Sigmoid colon (tissue), 7 donors: ENCODE measurements at regions of chr5 and their contacts with region 1.

Region 1: GRCh38 chr5:180090098-180090768 is 18.7 kb upstream of the RNF130 start:
- DNase-seq: peak; percentile 84
- H3K4me3 ChIP-seq: peak overlapping the region; percentile 51 to 69 (median 58)
- H3K27ac ChIP-seq: peak overlapping the region; percentile 76 to 82 (median 80)
- H3K4me1 ChIP-seq: peaks cover 0 to 9% (median 7%) of the 10 kb centered on the region in 4 donors
- H3K27me3 ChIP-seq: no peaks in the 10 kb centered on the region
- CTCF ChIP-seq: peak; percentile 63 to 89 (median 66)
- EP300 ChIP-seq: no peak
- POLR2A ChIP-seq: no peak

Region 2: DNA sequence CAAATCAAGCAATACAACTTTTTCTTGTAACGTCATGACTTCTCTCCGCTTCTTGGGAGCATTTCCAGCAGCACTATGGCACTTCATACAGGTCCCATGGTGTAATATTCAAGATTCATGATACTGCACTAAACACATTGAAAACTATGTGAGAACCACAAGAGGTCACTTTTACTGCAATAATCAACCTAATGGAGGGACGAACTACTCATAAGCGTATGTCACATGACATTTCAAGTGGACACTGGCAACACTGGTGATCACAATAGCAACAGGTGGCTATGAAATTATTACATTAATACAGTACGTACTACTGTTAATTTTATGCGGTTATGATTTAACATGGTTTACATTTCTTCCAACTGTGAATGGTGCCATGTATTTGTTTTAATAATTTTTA is 103.9 kb before region 1 on chr5:
- intact Hi-C with region 1: loop called (anchors 1 kb)
- DNase-seq: no peak
- H3K4me3 ChIP-seq: no peak overlapping the region
- H3K27ac ChIP-seq: no peak overlapping the region
- H3K4me1 ChIP-seq: no peaks in the 10 kb centered on the region
- H3K27me3 ChIP-seq: no peaks in the 10 kb centered on the region
- CTCF ChIP-seq: peak in 1 of 4 experiments; percentile 16
- EP300 ChIP-seq: no peak
- POLR2A ChIP-seq: no peak

Region 3: GRCh38 chr5:180071531-180072255 is 18.5 kb before region 1 on chr5 and contains the start of gene RNF130:
- intact Hi-C with region 1: loop called (anchors 1 kb)
- DNase-seq: peak; percentile 97
- H3K4me3 ChIP-seq: peak within 1 kb of the TSS; percentile 88 to 96 (median 92)
- H3K27ac ChIP-seq: peak within 1 kb of the TSS; percentile 96 to 99 (median 98)
- H3K4me1 ChIP-seq: peaks cover 0 to 42% (median 27%) of the 10 kb centered on the region in 4 donors
- H3K27me3 ChIP-seq: no peaks in the 10 kb centered on the region
- CTCF ChIP-seq: no peak
- EP300 ChIP-seq: peak in 1 of 4 donors; percentile 19
- POLR2A ChIP-seq: peak in 1 of 2 donors; percentile 33
- total RNA-seq, gene RNF130: 64.1 to 144 (median 117) TPM

Region 4: GRCh38 chr5:180474569-180474968 is 384.3 kb after region 1 on chr5:
- intact Hi-C with region 1: no loop called
- DNase-seq: no peak
- H3K4me3 ChIP-seq: no peak overlapping the region
- H3K27ac ChIP-seq: no peak overlapping the region
- H3K4me1 ChIP-seq: no peaks in the 10 kb centered on the region
- H3K27me3 ChIP-seq: peaks cover 0 to 11% (median 0%) of the 10 kb centered on the region in 3 donors
- CTCF ChIP-seq: no peak
- EP300 ChIP-seq: no peak
- POLR2A ChIP-seq: no peak